Activated CD4-positive, alpha-beta memory T cell treated with anti-CD3 and anti-CD28 coated beads, Interleukin-2, amount 10 ng/mL, durations not matched to agents 7 days and 5 days (primary cell): ENCODE measurements at regions of chr20 and their contacts with region 1.

Region 1: GRCh38 chr20:19205977-19206396 is 6.5 kb upstream of the SLC24A3 start:
- DNase-seq: peak; percentile 64
- H3K4me3 Mint-ChIP-seq: no peak overlapping the region
- H3K27ac Mint-ChIP-seq: no peak overlapping the region
- H3K4me1 Mint-ChIP-seq: no peaks in the 10 kb centered on the region
- H3K27me3 Mint-ChIP-seq: peaks cover 6% of the 10 kb centered on the region

Region 2: DNA sequence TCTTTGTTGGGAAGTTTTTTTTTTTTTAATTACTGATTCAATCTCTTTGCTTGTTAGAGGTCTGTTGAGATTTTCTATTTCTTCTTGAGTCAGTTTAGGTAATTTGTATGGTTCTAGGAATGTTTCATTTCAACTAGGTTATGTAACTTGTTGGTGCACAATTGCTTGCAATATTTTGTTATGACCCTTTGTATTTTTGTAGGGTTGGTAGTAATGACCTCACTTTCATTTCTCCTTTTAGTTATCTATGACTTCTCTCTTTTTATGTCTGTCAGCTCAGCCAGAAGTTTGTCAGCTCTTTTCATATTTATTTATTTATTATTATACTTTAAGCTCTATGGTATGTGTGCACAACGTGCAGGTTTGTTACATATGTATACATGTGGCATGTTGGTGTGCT is 44.7 kb before region 1 on chr20:
- CTCF ChIA-PET with region 1: no interaction called
- POLR2A ChIA-PET with region 1: no interaction called
- DNase-seq: no peak
- H3K4me3 Mint-ChIP-seq: no peak overlapping the region
- H3K27ac Mint-ChIP-seq: no peak overlapping the region
- H3K4me1 Mint-ChIP-seq: no peaks in the 10 kb centered on the region
- H3K27me3 Mint-ChIP-seq: no peaks in the 10 kb centered on the region

Region 3: GRCh38 chr20:19218411-19218810 is 12.4 kb after region 1 on chr20:
- CTCF ChIA-PET with region 1: interaction called, 15 read pairs
- POLR2A ChIA-PET with region 1: no interaction called
- DNase-seq: no peak
- H3K4me3 Mint-ChIP-seq: no peak overlapping the region
- H3K27ac Mint-ChIP-seq: no peak overlapping the region
- H3K4me1 Mint-ChIP-seq: no peaks in the 10 kb centered on the region
- H3K27me3 Mint-ChIP-seq: peaks cover 12% of the 10 kb centered on the region

Region 4: GRCh38 chr20:19232997-19233794 is 27.2 kb after region 1 on chr20:
- CTCF ChIA-PET with region 1: no interaction called
- POLR2A ChIA-PET with region 1: no interaction called
- DNase-seq: no peak
- H3K4me3 Mint-ChIP-seq: no peak overlapping the region
- H3K27ac Mint-ChIP-seq: no peak overlapping the region
- H3K4me1 Mint-ChIP-seq: no peaks in the 10 kb centered on the region
- H3K27me3 Mint-ChIP-seq: no peaks in the 10 kb centered on the region

Region 5: DNA sequence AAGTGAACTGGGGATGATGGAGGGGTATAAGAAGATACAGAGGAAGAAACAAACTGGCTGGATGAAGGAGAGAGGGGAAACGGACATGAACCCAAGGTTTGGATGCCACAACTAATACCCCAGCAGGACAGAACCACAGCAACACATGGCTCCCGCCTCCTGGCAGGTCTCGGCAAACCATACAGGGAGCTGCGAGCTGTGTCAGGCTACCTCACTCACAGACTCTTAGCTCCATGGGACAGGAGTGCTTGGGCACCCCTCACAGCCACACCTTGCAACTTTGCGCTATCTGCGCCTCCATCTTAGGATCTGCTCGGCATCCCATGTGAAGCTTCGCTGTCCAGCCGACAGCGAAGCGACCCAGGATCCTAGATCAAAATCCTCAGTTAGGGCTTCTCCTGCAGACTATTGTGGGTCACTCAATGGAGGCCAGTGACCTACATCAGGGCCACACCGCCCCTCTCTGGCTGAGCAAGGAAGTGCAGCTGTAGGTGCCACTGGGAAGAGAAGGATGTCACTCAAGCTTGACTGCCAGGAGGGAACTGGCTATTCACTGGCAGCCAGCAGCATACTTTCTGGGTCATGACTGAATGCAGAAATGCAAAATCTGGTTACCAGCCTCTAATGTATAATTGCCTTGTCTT is 377.7 kb after region 1 on chr20:
- CTCF ChIA-PET with region 1: interaction called, 13 read pairs
- POLR2A ChIA-PET with region 1: no interaction called
- DNase-seq: peak; percentile 31
- H3K4me3 Mint-ChIP-seq: no peak overlapping the region
- H3K27ac Mint-ChIP-seq: no peak overlapping the region
- H3K4me1 Mint-ChIP-seq: no peaks in the 10 kb centered on the region
- H3K27me3 Mint-ChIP-seq: no peaks in the 10 kb centered on the region